A673 (cell line): ENCODE measurements at regions of chr15 and their contacts with region 1.

Region 1: DNA sequence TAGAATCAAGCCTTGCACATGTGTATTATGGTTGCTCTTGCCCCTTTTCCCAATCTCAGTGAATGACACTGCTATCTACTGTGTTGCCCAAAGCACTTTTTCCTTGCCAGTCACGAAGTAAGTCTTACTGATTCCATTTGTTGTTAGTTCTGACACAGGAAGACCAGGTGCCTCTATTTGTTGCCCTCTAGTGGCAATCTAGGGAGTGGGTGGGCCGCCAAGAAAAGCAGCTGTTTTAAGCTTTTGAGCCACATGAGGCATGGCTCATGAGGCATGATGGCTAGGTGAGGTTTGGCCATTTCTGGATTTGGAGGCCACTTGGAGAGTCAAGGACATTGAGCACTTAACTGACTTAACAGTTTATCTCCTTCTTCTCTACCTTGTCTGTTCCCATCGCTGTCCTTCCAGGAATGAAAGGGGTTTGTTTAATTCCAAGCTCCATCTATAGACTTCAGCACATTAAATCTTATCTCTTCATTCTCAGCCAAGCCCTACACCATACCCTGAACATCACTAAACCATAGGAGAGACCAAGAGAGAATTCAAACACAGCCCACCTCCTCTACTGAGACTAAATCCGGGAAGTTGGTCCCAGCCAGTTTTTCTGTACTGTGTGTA is 103.1 kb downstream of the HCN4 start:
- DNase-seq: peak; percentile 76
- H3K4me3 ChIP-seq: no peak overlapping the region
- H3K27ac ChIP-seq: no peak overlapping the region
- H3K4me1 ChIP-seq: no peaks in the 10 kb centered on the region
- H3K27me3 ChIP-seq: no peaks in the 10 kb centered on the region
- CTCF ChIP-seq: peak; percentile 88

Region 2: GRCh38 chr15:72783563-72784237 is 481.9 kb before region 1 on chr15 and contains the start of gene ADPGK:
- CTCF ChIA-PET with region 1: interaction called, 3 read pairs
- POLR2A ChIA-PET with region 1: no interaction called
- intact Hi-C with region 1: loop called (anchors 5 kb)
- DNase-seq: peak; percentile 95
- H3K4me3 ChIP-seq: peak within 1 kb of the TSS; percentile 94
- H3K27ac ChIP-seq: peak within 1 kb of the TSS; percentile 88
- H3K4me1 ChIP-seq: peaks cover 12% of the 10 kb centered on the region
- H3K27me3 ChIP-seq: no peaks in the 10 kb centered on the region
- CTCF ChIP-seq: no peak
- total RNA-seq, gene ADPGK: 42.2 and 48.4 TPM in 2 replicates

Region 3: GRCh38 chr15:72796515-72797337 is 468.9 kb before region 1 on chr15:
- CTCF ChIA-PET with region 1: no interaction called
- POLR2A ChIA-PET with region 1: no interaction called
- intact Hi-C with region 1: loop called (anchors 5 kb)
- DNase-seq: peak; percentile 71
- H3K4me3 ChIP-seq: peak overlapping the region; percentile 49
- H3K27ac ChIP-seq: no peak overlapping the region
- H3K4me1 ChIP-seq: peaks cover 3% of the 10 kb centered on the region
- H3K27me3 ChIP-seq: no peaks in the 10 kb centered on the region
- CTCF ChIP-seq: peak; percentile 56; the same call in 1 of the 2 replicates

Region 4: DNA sequence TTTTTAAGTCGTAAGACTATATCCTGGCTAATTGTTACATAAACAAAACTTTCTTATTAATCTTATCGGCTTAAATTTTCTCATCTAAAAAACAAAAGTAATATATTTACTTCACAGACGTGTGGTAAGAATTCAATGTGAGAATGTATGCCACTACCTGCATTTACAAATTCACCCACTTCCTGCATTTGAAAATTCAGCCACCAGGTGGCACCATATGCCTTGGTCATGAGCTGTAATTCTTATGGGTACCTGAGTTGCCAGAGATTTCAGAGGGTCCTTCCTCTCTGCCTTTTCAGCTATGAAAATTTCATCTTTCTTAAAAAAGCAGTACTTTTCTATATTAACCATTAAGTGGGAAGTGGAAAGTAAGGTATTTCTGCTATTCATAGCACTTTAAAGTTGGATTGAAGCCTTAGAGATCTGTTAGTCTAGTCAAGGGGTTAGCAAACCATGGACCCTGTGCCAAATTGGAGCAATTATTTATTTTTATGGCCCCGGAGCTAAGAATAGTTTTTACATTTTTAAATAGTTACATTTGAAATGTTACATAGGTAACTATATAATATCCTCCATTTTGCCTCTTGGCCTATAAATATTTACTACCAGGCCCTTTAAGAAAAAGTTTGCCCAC is 24.7 kb before region 1 on chr15:
- CTCF ChIA-PET with region 1: interaction called, 17 read pairs
- POLR2A ChIA-PET with region 1: no interaction called
- intact Hi-C with region 1: no loop called
- DNase-seq: peak; percentile 74
- H3K4me3 ChIP-seq: no peak overlapping the region
- H3K27ac ChIP-seq: no peak overlapping the region
- H3K4me1 ChIP-seq: no peaks in the 10 kb centered on the region
- H3K27me3 ChIP-seq: no peaks in the 10 kb centered on the region
- CTCF ChIP-seq: peak; percentile 90